B cell (primary cell): ENCODE measurements at regions of chr4 and their contacts with region 1.

Region 1: DNA sequence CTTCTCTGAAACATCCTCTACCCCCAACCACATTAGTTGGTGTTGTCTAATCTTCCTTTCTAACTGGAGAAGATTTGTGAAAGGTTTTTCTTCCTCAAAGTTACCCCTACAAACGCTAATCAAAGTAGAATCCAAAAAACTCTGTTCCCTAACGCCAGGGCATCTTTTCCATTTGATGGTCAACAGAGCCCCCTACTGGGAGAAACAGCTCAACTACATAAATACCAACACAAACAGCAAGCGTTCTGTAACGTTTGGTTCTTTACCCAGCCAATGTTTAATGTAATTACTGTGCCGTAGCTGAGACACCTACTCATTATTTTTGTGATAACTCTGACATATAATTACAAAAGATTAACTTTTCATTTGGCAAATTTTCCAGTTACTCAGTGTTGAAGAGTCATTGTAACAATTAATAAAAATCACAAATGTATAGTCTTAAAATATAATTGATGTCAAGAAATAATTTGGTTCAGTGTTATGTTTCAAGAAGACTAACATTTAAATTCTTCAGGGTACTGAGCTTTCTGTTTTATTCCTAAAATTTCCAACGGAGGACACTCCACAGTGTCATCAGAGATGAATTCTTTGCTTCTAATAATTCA is 94.9 kb upstream of the TBC1D9 start:
- DNase-seq: peak; percentile 84
- ATAC-seq: peak; percentile 91
- H3K4me3 ChIP-seq: no peak overlapping the region
- H3K4me3 Mint-ChIP-seq: no peak overlapping the region
- H3K27ac ChIP-seq: peak overlapping the region in 1 of 2 donors; percentile 11
- H3K27ac Mint-ChIP-seq: peak overlapping the region; percentile 33
- H3K4me1 ChIP-seq: peaks cover 18 to 25% of the 10 kb centered on the region in 2 donors
- H3K4me1 Mint-ChIP-seq: peaks cover 26% of the 10 kb centered on the region
- H3K27me3 ChIP-seq: no peaks in the 10 kb centered on the region
- H3K27me3 Mint-ChIP-seq: no peaks in the 10 kb centered on the region
- CTCF ChIP-seq: peak; percentile 98

Region 2: GRCh38 chr4:140326395-140326993 is 524.6 kb before region 1 on chr4:
- CTCF ChIA-PET with region 1: no interaction called
- POLR2A ChIA-PET with region 1: no interaction called
- intact Hi-C with region 1: no loop called
- DNase-seq: peak; percentile 9
- ATAC-seq: no peak
- H3K4me3 ChIP-seq: no peak overlapping the region
- H3K4me3 Mint-ChIP-seq: no peak overlapping the region
- H3K27ac ChIP-seq: no peak overlapping the region
- H3K27ac Mint-ChIP-seq: no peak overlapping the region
- H3K4me1 ChIP-seq: peaks cover 5 to 7% of the 10 kb centered on the region in 2 donors
- H3K4me1 Mint-ChIP-seq: peaks cover 4% of the 10 kb centered on the region
- H3K27me3 ChIP-seq: no peaks in the 10 kb centered on the region
- H3K27me3 Mint-ChIP-seq: peaks cover 12% of the 10 kb centered on the region
- CTCF ChIP-seq: peak; percentile 15

Region 3: DNA sequence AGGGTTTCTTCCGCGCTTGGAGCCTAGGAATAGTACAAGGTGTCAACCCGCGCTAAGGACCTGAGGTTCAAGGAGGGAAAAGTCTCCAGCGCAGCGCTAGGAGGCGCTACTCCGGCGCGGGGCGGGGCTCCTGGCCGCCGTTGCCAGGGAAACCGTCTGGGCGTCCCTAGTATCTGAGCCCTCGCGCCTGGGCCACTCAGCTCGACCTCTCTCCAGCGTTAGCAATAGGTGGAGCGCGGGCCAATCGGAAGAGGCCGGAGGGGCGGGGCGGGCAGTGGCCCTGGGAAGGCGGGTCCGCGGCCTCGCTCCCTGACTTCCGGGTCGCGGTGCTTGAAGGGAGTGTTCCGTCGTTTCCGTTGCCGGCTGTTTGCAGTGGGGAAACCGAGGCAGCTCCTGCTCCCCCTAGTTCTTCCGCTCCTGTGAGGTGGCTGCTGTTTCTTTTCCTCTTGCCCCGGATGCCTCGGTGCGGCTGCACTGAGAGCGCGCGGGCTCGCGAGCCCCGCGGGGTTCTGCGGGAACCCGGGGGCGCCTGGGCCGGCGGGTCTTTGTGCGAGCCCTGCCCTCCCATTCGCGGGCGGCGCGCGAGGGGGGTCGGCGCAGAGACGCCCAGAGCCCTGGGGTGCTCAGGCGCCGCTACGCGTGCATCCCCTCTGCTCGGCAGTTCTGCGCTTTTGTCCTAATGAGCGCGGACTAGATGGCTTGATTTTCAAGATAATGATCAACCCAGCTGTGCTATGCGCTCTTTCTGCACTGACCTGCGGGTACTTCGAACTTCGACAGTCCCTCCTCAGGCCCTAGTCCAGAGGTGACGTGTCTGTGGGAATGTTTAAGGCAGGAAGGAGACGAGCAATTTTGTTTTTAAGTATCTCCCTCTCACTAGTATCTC is 327.0 kb before region 1 on chr4 and contains the start of gene ELMOD2:
- CTCF ChIA-PET with region 1: interaction called, 3 read pairs
- POLR2A ChIA-PET with region 1: no interaction called
- intact Hi-C with region 1: loop called (anchors 5 kb)
- DNase-seq: peak; percentile 98
- ATAC-seq: peak; percentile 99
- H3K4me3 ChIP-seq: peak within 1 kb of the TSS; percentile 65 to 89 (median 78)
- H3K4me3 Mint-ChIP-seq: peak within 1 kb of the TSS; percentile 91
- H3K27ac ChIP-seq: peak within 1 kb of the TSS; percentile 59 to 71
- H3K27ac Mint-ChIP-seq: peak within 1 kb of the TSS; percentile 86
- H3K4me1 ChIP-seq: peaks cover 12 to 13% of the 10 kb centered on the region in 2 donors
- H3K4me1 Mint-ChIP-seq: peaks cover 16% of the 10 kb centered on the region
- H3K27me3 ChIP-seq: no peaks in the 10 kb centered on the region
- H3K27me3 Mint-ChIP-seq: no peaks in the 10 kb centered on the region
- CTCF ChIP-seq: peak; percentile 92
- total RNA-seq, gene ELMOD2: 23.4 and 25.3 TPM in 2 replicates

Region 4: DNA sequence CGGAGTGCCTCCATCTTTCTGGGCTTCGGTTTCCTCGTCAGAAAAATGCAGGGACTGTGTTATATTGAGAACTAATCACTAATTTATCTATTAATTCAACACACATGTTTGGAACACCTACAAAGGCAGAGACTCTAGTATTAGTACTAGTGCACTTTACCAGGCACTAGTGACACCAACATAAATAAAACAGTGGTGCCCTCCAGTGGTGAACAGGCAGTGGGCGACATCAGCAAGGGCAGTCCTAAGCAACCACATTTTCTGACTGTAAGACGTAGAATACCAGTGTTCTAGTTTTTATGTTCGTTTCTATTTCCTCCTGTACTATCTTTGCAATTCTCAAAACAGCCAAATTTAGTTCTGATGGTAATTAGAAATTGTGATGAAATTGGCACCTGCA is 213.3 kb before region 1 on chr4:
- CTCF ChIA-PET with region 1: interaction called, 21 read pairs
- POLR2A ChIA-PET with region 1: no interaction called
- intact Hi-C with region 1: loop called (anchors 1 kb)
- DNase-seq: peak; percentile 43
- ATAC-seq: peak; percentile 69
- H3K4me3 ChIP-seq: no peak overlapping the region
- H3K4me3 Mint-ChIP-seq: no peak overlapping the region
- H3K27ac ChIP-seq: no peak overlapping the region
- H3K27ac Mint-ChIP-seq: peak overlapping the region; percentile 8
- H3K4me1 ChIP-seq: no peaks in the 10 kb centered on the region
- H3K4me1 Mint-ChIP-seq: peaks cover 3% of the 10 kb centered on the region
- H3K27me3 ChIP-seq: no peaks in the 10 kb centered on the region
- H3K27me3 Mint-ChIP-seq: no peaks in the 10 kb centered on the region
- CTCF ChIP-seq: peak; percentile 69

Region 5: DNA sequence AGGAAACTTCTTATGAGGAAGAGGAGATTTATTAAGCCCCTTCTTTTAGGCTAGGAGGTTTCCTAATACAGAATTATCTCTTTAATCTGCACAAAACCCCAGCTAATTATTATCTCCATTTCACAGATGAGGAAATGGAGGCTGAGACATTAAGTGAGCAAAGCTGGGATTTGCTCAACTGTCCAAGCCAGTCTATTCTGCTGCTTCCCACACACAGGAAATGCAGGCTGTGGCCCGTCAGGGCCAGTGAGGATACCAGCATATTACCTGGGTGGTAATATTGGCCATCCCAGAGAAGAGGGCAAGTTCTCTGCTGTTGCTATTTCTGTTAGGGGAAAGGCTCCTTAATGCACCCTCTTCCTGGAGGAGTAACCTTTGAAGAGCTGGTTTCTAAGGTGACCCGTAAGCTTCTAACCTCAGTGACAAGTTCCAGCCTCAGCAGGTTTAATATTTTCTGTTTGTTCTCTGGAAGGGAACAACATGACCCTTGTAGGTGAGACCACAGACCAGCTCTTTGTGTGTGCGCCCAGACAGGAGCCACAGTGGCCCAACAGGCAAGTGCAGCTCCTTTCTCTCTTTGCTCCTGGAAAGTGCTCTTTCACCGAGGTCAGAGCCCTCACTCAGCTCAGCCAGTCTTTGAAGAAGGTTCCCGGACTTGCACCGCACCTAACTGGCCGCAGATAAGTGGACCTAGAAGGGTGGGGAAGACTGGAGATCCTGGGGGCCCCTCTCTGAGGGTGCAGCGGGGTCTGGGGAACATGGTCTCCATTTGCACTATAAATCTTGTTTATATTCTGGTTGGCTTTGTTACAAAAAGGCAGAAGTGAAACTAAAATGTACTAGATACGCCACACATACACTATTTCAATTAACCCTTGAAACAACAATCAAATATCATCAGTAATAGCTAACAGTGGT is 130.5 kb before region 1 on chr4:
- CTCF ChIA-PET with region 1: interaction called, 32 read pairs
- POLR2A ChIA-PET with region 1: interaction called, 4 read pairs
- intact Hi-C with region 1: no loop called
- DNase-seq: peak; percentile 75
- ATAC-seq: peak; percentile 63
- H3K4me3 ChIP-seq: peak overlapping the region; percentile 40 to 68 (median 54)
- H3K4me3 Mint-ChIP-seq: peak overlapping the region; percentile 89
- H3K27ac ChIP-seq: peak overlapping the region; percentile 92
- H3K27ac Mint-ChIP-seq: peak overlapping the region; percentile 99
- H3K4me1 ChIP-seq: peaks cover 75 to 76% of the 10 kb centered on the region in 2 donors
- H3K4me1 Mint-ChIP-seq: peaks cover 85% of the 10 kb centered on the region
- H3K27me3 ChIP-seq: no peaks in the 10 kb centered on the region
- H3K27me3 Mint-ChIP-seq: no peaks in the 10 kb centered on the region
- CTCF ChIP-seq: no peak

Region 6: GRCh38 chr4:140790765-140791164 is 60.4 kb before region 1 on chr4:
- CTCF ChIA-PET with region 1: interaction called, 18 read pairs
- POLR2A ChIA-PET with region 1: interaction called, 6 read pairs
- intact Hi-C with region 1: loop called (anchors 5 kb)
- DNase-seq: peak; percentile 93
- ATAC-seq: peak; percentile 92
- H3K4me3 ChIP-seq: peak overlapping the region in 1 of 5 experiments; percentile 31
- H3K4me3 Mint-ChIP-seq: peak overlapping the region; percentile 67
- H3K27ac ChIP-seq: peak overlapping the region; percentile 72 to 82
- H3K27ac Mint-ChIP-seq: peak overlapping the region; percentile 88
- H3K4me1 ChIP-seq: peaks cover 63 to 67% of the 10 kb centered on the region in 2 donors
- H3K4me1 Mint-ChIP-seq: peaks cover 69% of the 10 kb centered on the region
- H3K27me3 ChIP-seq: no peaks in the 10 kb centered on the region
- H3K27me3 Mint-ChIP-seq: no peaks in the 10 kb centered on the region
- CTCF ChIP-seq: no peak

Region 7: DNA sequence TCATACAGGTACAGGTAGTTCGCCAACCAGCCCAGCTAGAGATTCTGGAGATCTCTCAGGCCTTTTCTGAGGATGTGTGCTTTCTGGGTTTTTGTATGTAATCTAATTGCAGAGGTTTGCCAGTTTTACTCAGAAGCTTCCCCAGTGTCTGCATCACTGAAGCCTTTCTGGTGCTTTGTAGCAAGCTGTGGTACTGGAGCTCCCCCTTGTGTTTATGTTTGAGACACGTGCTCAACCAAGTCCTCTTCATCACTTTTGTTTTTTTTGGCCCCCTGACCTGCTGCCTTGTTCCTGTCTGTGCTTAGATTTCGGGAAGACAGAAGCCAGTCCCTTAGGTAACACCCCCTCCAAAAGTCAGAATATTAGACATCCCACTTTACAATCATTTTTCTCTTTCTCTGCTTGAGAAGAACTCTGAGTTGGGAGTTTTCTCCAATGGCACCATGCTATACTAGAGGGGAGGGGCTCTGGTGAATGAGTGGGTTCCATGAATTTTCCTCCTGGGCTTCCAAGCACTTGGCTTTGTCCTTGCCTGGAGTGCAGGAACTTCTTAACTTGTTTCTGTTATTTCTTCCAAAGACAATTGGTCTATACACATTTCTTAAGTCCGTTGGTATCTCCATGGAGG is 33.4 kb after region 1 on chr4:
- CTCF ChIA-PET with region 1: interaction called, 78 read pairs
- POLR2A ChIA-PET with region 1: interaction called, 3 read pairs
- intact Hi-C with region 1: no loop called
- DNase-seq: peak; percentile 76
- ATAC-seq: peak; percentile 67
- H3K4me3 ChIP-seq: no peak overlapping the region
- H3K4me3 Mint-ChIP-seq: no peak overlapping the region
- H3K27ac ChIP-seq: no peak overlapping the region
- H3K27ac Mint-ChIP-seq: peak overlapping the region; percentile 38
- H3K4me1 ChIP-seq: no peaks in the 10 kb centered on the region
- H3K4me1 Mint-ChIP-seq: peaks cover 3% of the 10 kb centered on the region
- H3K27me3 ChIP-seq: peaks cover 0 to 17% (median 0%) of the 10 kb centered on the region in 4 experiments
- H3K27me3 Mint-ChIP-seq: peaks cover 29% of the 10 kb centered on the region
- CTCF ChIP-seq: peak; percentile 79

Region 8: DNA sequence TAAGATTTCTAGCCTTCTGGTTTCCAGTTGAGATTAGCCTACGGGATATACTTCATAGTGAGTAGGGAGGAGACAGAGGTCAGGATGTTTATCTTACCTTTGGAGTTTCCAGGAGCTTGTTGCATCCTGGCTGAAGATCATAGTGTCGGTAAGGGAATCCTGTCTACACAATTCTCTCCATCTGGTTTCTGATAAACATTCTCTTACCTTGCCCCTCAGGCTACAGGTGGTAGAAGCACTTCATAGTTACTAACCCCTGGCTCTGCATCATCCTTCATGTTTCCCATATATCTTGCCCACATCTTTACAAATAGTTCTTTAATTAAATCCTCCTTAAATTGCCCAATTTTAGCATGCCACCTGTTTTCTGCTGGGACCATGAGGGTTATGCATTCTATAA is 468.7 kb after region 1 on chr4:
- CTCF ChIA-PET with region 1: no interaction called
- POLR2A ChIA-PET with region 1: no interaction called
- intact Hi-C with region 1: no loop called
- DNase-seq: no peak
- ATAC-seq: no peak
- H3K4me3 ChIP-seq: no peak overlapping the region
- H3K4me3 Mint-ChIP-seq: no peak overlapping the region
- H3K27ac ChIP-seq: no peak overlapping the region
- H3K27ac Mint-ChIP-seq: no peak overlapping the region
- H3K4me1 ChIP-seq: no peaks in the 10 kb centered on the region
- H3K4me1 Mint-ChIP-seq: no peaks in the 10 kb centered on the region
- H3K27me3 ChIP-seq: peaks cover 0 to 2% (median 0%) of the 10 kb centered on the region in 4 experiments
- H3K27me3 Mint-ChIP-seq: peaks cover 7% of the 10 kb centered on the region
- CTCF ChIP-seq: no peak